ENCODE measurements at regions of chr14 and their contacts with region 1.

Region 1: DNA sequence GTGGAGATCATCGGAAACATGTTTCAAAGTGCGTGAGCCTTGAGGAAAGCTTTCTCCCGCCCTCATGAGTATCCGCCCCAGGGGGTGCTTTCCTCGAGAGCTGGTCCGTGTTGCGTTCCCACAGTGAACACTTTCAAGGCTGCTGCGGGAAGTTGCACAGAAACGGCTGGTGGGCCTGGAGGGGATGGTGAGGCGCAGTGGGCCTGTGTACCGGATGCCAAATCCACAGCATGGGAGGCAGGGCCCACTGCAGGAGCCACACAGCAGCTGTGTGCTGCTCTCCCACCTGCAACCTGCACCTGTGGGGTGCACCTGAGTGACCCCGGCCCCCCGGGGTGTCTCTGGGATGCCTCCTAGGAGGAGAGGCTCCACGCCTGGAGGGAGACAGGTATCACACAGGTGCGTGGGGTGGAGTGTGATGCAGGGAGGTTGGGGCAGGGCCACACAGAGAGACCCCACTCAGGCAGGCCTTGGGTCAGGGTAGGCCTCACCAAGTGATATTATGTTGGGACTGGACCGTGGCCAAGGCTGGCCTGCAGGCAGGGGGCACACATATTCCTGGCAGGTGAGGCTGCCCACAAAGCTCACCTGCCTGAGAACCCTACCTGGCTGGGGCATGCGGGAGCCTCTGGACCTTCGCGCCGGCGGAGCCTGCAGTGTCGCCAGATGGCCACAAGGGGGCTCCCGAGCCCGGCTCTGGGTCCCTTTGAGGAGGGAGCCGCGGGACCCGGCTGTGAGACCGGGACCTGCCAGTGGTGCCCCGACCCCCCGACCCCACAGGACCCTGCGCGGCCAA is 11.2 kb downstream of the TMEM121 start:
- DNase-seq: no peak
- H3K4me3 ChIP-seq: no peak overlapping the region
- CTCF ChIP-seq: peak; percentile 95

Region 2: GRCh38 chr14:105549481-105549880 is 11.9 kb after region 1 on chr14:
- CTCF ChIA-PET with region 1: interaction called, 12 read pairs
- POLR2A ChIA-PET with region 1: no interaction called
- DNase-seq: no peak
- H3K4me3 ChIP-seq: no peak overlapping the region
- CTCF ChIP-seq: no peak